Activated T-helper 1 cell treated with anti-CD3 and anti-CD28 coated beads, Interleukin-12 subunit alpha, Interleukin-12 subunit beta, Interleukin-2, Interleukin-4 antibody, amounts not matched to agents 30 ng/mL and 10 ng/mL and 1 ng/mL, durations not matched to agents 14 hours and 24 hours and 36 hours (primary cell): ENCODE measurements at regions of chr3 and their contacts with region 1.

Region 1: GRCh38 chr3:51099794-51100535 is 285.1 kb upstream of the MANF start:
- DNase-seq: no peak
- H3K4me3 Mint-ChIP-seq: no peak overlapping the region
- H3K27ac Mint-ChIP-seq: no peak overlapping the region
- H3K4me1 Mint-ChIP-seq: no peaks in the 10 kb centered on the region
- H3K27me3 Mint-ChIP-seq: no peaks in the 10 kb centered on the region

Region 2: GRCh38 chr3:50146316-50146901 is 953.6 kb before region 1 on chr3:
- intact Hi-C with region 1: no loop called
- DNase-seq: no peak
- H3K4me3 Mint-ChIP-seq: no peak overlapping the region
- H3K27ac Mint-ChIP-seq: no peak overlapping the region
- H3K4me1 Mint-ChIP-seq: no peaks in the 10 kb centered on the region
- H3K27me3 Mint-ChIP-seq: peaks cover 6% of the 10 kb centered on the region

Region 3: GRCh38 chr3:51379301-51379700 is 279.3 kb after region 1 on chr3:
- intact Hi-C with region 1: loop called (anchors 2 kb)
- DNase-seq: no peak
- H3K4me3 Mint-ChIP-seq: no peak overlapping the region
- H3K27ac Mint-ChIP-seq: no peak overlapping the region
- H3K4me1 Mint-ChIP-seq: peaks cover 15% of the 10 kb centered on the region
- H3K27me3 Mint-ChIP-seq: peaks cover 2% of the 10 kb centered on the region